Psoas muscle (tissue), 8 donors: ENCODE measurements at regions of chr3 and their contacts with region 1.

Region 1: GRCh38 chr3:186241910-186242821 is 119.9 kb downstream of the DGKG start:
- DNase-seq: peak; percentile 72 to 90
- ATAC-seq: peak; percentile 94 to 96 (median 95)
- H3K4me3 ChIP-seq: peak overlapping the region; percentile 65
- H3K27ac ChIP-seq: peak overlapping the region; percentile 90
- H3K4me1 ChIP-seq: peaks cover 46% of the 10 kb centered on the region
- H3K27me3 ChIP-seq: no peaks in the 10 kb centered on the region
- CTCF ChIP-seq: peak; percentile 58

Region 2: GRCh38 chr3:186097663-186098451 is 144.3 kb before region 1 on chr3:
- intact Hi-C with region 1: loop called in 1 of 2 experiments (anchors 5 kb)
- DNase-seq: peak; percentile 29 to 73
- ATAC-seq: peak; percentile 77 to 87 (median 81)
- H3K4me3 ChIP-seq: peak overlapping the region; percentile 63
- H3K27ac ChIP-seq: peak overlapping the region; percentile 43
- H3K4me1 ChIP-seq: peaks cover 32% of the 10 kb centered on the region
- H3K27me3 ChIP-seq: no peaks in the 10 kb centered on the region
- CTCF ChIP-seq: no peak

Region 3: DNA sequence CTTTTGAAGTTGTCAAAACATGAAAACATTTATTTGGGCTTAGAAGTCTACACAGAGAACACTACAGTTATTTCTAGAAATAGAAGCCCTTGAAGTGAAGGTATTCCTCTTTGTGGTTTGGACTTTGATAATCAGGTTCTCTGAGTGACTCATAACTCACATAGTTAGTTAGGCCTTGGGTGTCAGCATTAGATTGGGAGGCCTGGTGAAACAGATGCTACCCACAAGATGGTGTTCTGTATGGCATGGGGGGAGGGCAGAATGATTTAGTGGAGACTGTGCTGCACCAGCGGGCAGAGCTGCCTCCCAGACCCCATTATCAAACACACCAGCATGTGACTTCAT is 24.4 kb before region 1 on chr3:
- intact Hi-C with region 1: loop called in 1 of 2 experiments (anchors 2 kb)
- DNase-seq: no peak
- ATAC-seq: peak in 1 of 4 donors; percentile 28
- H3K4me3 ChIP-seq: no peak overlapping the region
- H3K27ac ChIP-seq: peak overlapping the region; percentile 58
- H3K4me1 ChIP-seq: peaks cover 64% of the 10 kb centered on the region
- H3K27me3 ChIP-seq: no peaks in the 10 kb centered on the region
- CTCF ChIP-seq: no peak